ENCODE measurements at regions of chr14 and their contacts with region 1.

Region 1: DNA sequence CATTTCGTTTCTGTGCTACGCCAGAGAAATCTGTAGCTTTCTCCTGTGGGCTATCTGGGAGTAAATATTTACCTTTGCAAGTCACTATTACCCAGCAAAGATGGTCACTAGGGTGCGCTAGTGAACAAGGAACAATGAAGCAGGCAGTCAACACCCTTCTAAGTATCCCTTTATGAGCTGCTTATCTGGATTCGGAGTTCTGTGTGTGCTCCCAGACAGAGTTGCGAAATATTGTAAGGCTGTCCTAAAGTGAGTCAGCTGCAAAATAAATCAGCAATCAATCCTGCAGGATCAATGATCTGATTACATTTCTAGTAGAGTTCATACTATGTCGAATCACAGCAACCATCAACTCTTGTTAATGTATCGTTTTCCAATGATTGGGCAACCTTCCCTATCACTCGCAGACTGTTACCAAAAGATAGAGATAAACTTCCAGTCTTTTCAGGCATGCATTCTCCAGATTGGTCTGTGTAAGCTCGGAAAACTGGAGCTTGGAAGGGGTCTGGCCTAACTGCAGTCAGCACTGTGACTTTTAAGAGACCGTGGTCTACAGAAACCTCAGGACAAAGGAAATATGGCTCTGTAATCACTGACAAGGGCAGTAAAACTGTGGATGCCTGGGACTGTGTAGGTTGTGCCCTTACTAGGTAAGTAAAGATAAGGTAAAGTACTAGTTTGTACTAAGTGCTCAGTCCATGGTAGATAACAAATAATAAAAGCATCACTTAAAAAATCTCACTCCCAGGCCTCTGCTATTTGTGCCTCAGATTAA is 133.5 kb downstream of the KCNK10 start:
- DNase-seq: peak; percentile 88
- H3K4me3 Mint-ChIP-seq: no peak overlapping the region
- H3K27ac Mint-ChIP-seq: no peak overlapping the region
- H3K4me1 Mint-ChIP-seq: peaks cover 7% of the 10 kb centered on the region
- H3K27me3 Mint-ChIP-seq: peaks cover 56% of the 10 kb centered on the region
- CTCF ChIP-seq: peak; percentile 69

Region 2: DNA sequence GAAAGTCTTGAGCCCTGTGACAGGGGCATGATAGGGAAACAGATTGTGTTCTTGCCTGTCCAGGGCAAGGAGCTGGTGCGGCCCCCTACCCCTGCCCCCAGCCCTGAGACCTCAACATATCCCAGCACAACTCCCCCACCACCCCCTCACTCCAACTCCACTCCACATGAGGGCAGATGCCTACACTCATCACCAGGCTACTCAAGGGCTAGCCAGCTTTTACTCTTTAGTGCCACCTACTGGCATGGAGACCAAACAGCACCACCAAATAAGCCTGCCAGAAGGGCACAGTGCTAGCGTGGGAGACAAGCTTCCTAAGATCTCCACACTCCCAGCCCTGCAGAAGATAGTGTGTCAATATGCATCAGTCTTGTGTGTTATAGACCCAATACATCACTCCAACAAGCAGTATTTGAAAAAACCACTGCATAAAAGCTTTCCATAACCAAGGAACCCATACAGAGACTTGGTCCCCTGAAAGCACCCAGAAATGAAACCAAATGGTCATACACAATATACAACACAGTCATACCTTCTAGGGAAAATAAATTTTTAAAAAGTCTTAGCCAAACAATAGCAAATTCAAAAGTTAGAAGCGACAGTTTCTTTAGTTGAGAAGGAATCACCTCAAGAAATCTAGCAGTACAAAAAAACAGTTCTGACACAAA is 21.0 kb before region 1 on chr14:
- CTCF ChIA-PET with region 1: interaction called, 15 read pairs
- POLR2A ChIA-PET with region 1: no interaction called
- intact Hi-C with region 1: no loop called
- DNase-seq: peak; percentile 60
- H3K4me3 Mint-ChIP-seq: no peak overlapping the region
- H3K27ac Mint-ChIP-seq: no peak overlapping the region
- H3K4me1 Mint-ChIP-seq: no peaks in the 10 kb centered on the region
- H3K27me3 Mint-ChIP-seq: peaks cover 39% of the 10 kb centered on the region
- CTCF ChIP-seq: peak; percentile 60

Region 3: GRCh38 chr14:88233915-88234314 is 44.3 kb after region 1 on chr14:
- CTCF ChIA-PET with region 1: interaction called, 7 read pairs
- POLR2A ChIA-PET with region 1: no interaction called
- intact Hi-C with region 1: loop called (anchors 1 kb)
- DNase-seq: peak; percentile 52
- H3K4me3 Mint-ChIP-seq: no peak overlapping the region
- H3K27ac Mint-ChIP-seq: no peak overlapping the region
- H3K4me1 Mint-ChIP-seq: no peaks in the 10 kb centered on the region
- H3K27me3 Mint-ChIP-seq: peaks cover 19% of the 10 kb centered on the region
- CTCF ChIP-seq: peak; percentile 29

Region 4: DNA sequence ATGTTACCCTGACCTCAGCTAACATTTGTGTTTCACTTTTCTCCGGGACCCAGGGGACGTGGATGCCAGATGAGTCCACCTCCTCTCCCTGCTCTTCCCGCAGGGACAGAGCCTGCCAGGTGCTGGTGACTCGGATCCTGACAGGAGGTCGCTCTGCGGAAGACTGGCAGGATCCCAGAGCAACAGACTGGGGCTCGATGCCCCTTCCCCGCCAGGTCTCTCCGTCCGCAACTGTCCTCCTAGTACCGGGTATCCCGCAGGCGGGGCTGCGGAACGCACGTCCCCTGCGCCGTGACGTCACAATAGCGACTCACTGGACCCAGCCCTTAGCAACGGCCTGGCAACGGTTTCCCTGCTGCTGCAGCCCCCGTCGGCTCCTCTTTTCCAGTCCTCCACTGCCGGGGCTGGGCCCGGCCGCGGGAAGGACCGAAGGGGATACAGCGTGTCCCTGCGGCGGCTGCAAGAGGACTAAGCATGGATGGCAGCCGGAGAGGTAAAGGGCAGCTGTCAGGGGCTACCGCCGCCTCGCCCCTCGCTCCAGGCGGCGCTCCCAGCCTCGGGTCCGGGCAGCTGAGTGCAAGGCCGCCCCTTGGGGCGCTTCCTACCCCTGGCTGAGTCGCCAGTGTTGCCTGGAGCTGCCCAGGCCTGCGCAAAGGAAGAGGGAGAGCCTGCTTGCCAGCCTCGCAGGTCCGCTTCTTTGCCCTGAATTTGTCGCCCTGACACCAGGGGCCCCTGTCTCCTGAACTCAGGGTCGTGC is 195.9 kb after region 1 on chr14 and contains the start of gene SPATA7:
- CTCF ChIA-PET with region 1: interaction called, 84 read pairs
- POLR2A ChIA-PET with region 1: interaction called, 8 read pairs
- intact Hi-C with region 1: loop called (anchors 1 kb)
- DNase-seq: peak; percentile 86
- H3K4me3 Mint-ChIP-seq: peak within 1 kb of the TSS; percentile 97
- H3K27ac Mint-ChIP-seq: peak within 1 kb of the TSS; percentile 88
- H3K4me1 Mint-ChIP-seq: peaks cover 6% of the 10 kb centered on the region
- H3K27me3 Mint-ChIP-seq: no peaks in the 10 kb centered on the region
- CTCF ChIP-seq: no peak
- total RNA-seq, gene SPATA7: 3.7 and 5.7 TPM in 2 replicates

Region 5: DNA sequence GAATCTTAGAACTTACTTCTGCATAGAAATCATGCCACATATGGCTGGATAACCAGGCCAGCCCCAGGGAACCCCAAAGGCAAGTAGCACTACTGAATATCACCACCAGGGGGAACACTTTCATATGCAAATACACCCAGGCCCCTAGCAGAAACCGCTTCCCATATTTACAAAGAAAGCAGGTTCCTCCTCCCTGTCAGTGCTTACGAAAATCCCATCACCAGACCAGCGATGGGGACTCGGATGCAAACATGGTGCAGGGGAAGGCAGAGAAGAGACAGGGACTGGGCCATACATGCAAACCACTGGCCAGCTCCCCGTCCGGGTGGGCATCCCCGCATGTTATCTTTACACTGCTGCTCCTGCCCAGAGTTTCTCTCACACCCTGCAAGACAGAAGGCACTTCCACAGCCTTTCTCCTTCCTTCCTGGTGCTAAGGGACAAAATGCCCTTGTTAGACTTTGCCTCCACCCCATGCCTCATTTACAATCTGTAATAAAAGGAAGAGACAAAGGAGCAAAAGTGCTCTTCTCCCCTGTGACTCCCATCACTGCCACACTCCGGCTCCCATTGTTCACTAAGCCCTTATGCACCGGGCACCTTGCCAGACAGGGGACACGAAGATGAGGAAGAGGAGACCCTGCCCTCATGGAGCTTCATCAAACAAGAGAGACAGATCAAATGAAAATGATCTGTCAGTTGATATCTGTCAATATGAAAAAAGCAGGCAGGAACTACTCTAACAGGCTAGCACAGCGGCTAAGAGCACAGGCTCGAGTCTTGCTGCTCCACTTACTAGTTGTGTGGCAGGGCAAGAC is 302.9 kb after region 1 on chr14:
- CTCF ChIA-PET with region 1: interaction called, 13 read pairs
- POLR2A ChIA-PET with region 1: no interaction called
- intact Hi-C with region 1: loop called (anchors 1 kb)
- DNase-seq: peak; percentile 74
- H3K4me3 Mint-ChIP-seq: no peak overlapping the region
- H3K27ac Mint-ChIP-seq: no peak overlapping the region
- H3K4me1 Mint-ChIP-seq: no peaks in the 10 kb centered on the region
- H3K27me3 Mint-ChIP-seq: no peaks in the 10 kb centered on the region
- CTCF ChIP-seq: peak; percentile 77

Measured in MCF 10A (cell line).